Common myeloid progenitor, CD34-positive (primary cell): ENCODE measurements at regions of chr4 and their contacts with region 1.

Region 1: GRCh38 chr4:38902695-38903094 is 35.1 kb downstream of the FAM114A1 start:
- DNase-seq: peak; percentile 45 to 70 (median 61)
- H3K4me3 ChIP-seq: no peak overlapping the region
- H3K27ac ChIP-seq: no peak overlapping the region
- H3K4me1 ChIP-seq: peaks cover 0 to 10% (median 6%) of the 10 kb centered on the region in 4 experiments
- H3K27me3 ChIP-seq: no peaks in the 10 kb centered on the region

Region 2: DNA sequence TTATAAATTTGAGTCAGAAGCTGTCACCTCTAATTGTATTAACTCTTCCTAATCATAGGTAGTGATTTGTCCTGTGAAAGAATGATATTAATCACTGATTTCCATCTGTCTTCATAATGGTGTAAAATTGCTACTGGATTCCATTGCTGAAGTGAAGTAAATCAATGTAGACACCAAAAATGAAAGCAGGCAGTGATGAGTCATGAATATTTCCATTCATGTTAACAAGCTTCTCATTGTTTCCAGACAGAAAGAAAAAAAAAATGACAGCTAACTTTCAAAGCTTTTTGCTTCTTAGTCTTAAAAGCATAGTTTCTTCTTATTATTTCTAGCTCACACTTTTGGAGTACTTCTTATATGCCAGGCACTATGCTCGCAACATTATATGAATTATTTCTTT is 13.6 kb before region 1 on chr4:
- CTCF ChIA-PET with region 1: interaction called, 29 read pairs
- POLR2A ChIA-PET with region 1: no interaction called
- DNase-seq: peak; percentile 40 to 83 (median 78)
- H3K4me3 ChIP-seq: peak overlapping the region in 1 of 7 experiments; percentile 50
- H3K27ac ChIP-seq: no peak overlapping the region
- H3K4me1 ChIP-seq: peaks cover 2 to 13% (median 4%) of the 10 kb centered on the region in 4 experiments
- H3K27me3 ChIP-seq: no peaks in the 10 kb centered on the region

Region 3: DNA sequence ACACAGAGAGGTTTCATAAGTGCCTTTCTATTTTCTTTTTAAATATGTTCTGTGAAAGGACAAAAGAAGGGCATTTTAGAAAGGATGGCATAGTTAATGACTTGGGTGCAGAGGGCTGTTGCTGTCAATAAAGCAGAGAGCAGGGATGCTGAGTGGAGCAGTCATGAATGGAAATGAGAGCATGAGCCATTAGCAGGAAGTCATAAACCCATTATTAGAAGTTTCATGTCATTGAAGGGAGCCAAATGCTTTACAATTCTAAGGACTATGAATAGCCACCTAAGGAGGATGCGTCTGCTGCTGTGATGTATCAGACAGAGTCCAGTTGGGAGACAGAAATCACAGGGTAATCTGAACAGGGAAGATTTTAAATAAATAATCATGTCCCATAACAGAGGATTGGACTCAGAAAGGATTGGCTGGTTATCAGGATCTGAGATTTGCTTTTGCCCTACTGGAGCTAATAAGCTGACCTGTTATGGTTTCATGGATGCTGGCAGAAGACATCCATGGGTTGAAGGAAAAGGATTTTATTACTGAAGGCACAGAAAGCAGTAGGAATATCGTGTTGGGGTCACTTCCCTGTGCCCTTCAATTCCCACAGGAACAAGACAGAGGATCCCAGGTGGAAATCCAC is 232.1 kb after region 1 on chr4:
- CTCF ChIA-PET with region 1: interaction called, 136 read pairs
- POLR2A ChIA-PET with region 1: interaction called, 3 read pairs
- DNase-seq: no peak
- H3K4me3 ChIP-seq: peak overlapping the region in 1 of 7 experiments; percentile 54
- H3K27ac ChIP-seq: no peak overlapping the region
- H3K4me1 ChIP-seq: peaks cover 0 to 4% (median 3%) of the 10 kb centered on the region in 4 experiments
- H3K27me3 ChIP-seq: no peaks in the 10 kb centered on the region